ENCODE measurements at regions of chr11 and their contacts with region 1.

Region 1: GRCh38 chr11:11848891-11849746 is 7.3 kb downstream of the USP47 start:
- DNase-seq: peak; percentile 78
- ATAC-seq: peak; percentile 82
- H3K4me3 Mint-ChIP-seq: peak overlapping the region; percentile 31
- H3K27ac Mint-ChIP-seq: peak overlapping the region; percentile 71
- H3K4me1 Mint-ChIP-seq: peaks cover 81% of the 10 kb centered on the region
- H3K27me3 Mint-ChIP-seq: no peaks in the 10 kb centered on the region
- CTCF ChIP-seq: peak; percentile 79

Region 2: GRCh38 chr11:11806586-11806985 is 42.5 kb before region 1 on chr11:
- CTCF ChIA-PET with region 1: interaction called, 12 read pairs
- POLR2A ChIA-PET with region 1: no interaction called
- intact Hi-C with region 1: no loop called
- DNase-seq: no peak
- ATAC-seq: no peak
- H3K4me3 Mint-ChIP-seq: no peak overlapping the region
- H3K27ac Mint-ChIP-seq: no peak overlapping the region
- H3K4me1 Mint-ChIP-seq: no peaks in the 10 kb centered on the region
- H3K27me3 Mint-ChIP-seq: peaks cover 4% of the 10 kb centered on the region
- CTCF ChIP-seq: no peak

Region 3: GRCh38 chr11:11864803-11865202 is 15.7 kb after region 1 on chr11:
- CTCF ChIA-PET with region 1: interaction called, 24 read pairs
- POLR2A ChIA-PET with region 1: no interaction called
- intact Hi-C with region 1: no loop called
- DNase-seq: no peak
- ATAC-seq: peak; percentile 73
- H3K4me3 Mint-ChIP-seq: no peak overlapping the region
- H3K27ac Mint-ChIP-seq: peak overlapping the region; percentile 65
- H3K4me1 Mint-ChIP-seq: peaks cover 59% of the 10 kb centered on the region
- H3K27me3 Mint-ChIP-seq: no peaks in the 10 kb centered on the region
- CTCF ChIP-seq: no peak

Region 4: DNA sequence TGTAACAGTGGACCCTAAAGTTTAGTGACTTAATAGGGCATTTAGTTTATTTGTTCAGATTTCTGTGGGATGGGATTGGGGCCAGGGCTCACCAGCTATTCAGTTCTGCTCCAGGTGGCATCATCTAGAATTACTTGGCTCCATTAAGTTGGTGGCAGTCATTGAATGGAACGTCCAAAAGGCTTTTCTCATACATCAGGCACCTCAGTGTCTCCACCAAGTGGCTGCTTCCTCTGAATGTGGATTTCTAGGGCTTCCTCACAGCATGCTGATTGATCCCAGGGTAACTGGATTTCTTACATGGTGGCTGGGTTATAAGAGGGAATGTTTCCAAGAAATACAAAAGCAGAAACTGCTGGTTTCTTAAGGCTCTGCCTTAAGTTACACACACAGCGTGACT is 27.3 kb after region 1 on chr11:
- CTCF ChIA-PET with region 1: interaction called, 16 read pairs
- POLR2A ChIA-PET with region 1: no interaction called
- intact Hi-C with region 1: no loop called
- DNase-seq: peak; percentile 33
- ATAC-seq: no peak
- H3K4me3 Mint-ChIP-seq: no peak overlapping the region
- H3K27ac Mint-ChIP-seq: no peak overlapping the region
- H3K4me1 Mint-ChIP-seq: peaks cover 46% of the 10 kb centered on the region
- H3K27me3 Mint-ChIP-seq: no peaks in the 10 kb centered on the region
- CTCF ChIP-seq: no peak

Region 5: GRCh38 chr11:11884774-11885481 is 35.8 kb after region 1 on chr11:
- CTCF ChIA-PET with region 1: interaction called, 13 read pairs
- POLR2A ChIA-PET with region 1: no interaction called
- intact Hi-C with region 1: loop called (anchors 5 kb)
- DNase-seq: peak; percentile 12
- ATAC-seq: peak; percentile 61
- H3K4me3 Mint-ChIP-seq: no peak overlapping the region
- H3K27ac Mint-ChIP-seq: peak overlapping the region; percentile 57
- H3K4me1 Mint-ChIP-seq: peaks cover 48% of the 10 kb centered on the region
- H3K27me3 Mint-ChIP-seq: no peaks in the 10 kb centered on the region
- CTCF ChIP-seq: no peak

Measured in activated CD8-positive, alpha-beta T cell treated with anti-CD3 and anti-CD28 coated beads for 36 hours (primary cell).